AG04449 (cell line): ENCODE measurements at regions of chrX and their contacts with region 1.

Region 1: GRCh38 chrX:108126661-108127060 is 35.1 kb downstream of the ATG4A start:
- DNase-seq: no peak
- H3K4me3 ChIP-seq: no peak overlapping the region
- CTCF ChIP-seq: no peak

Region 2: GRCh38 chrX:107207089-107207488 is 919.6 kb before region 1 on chrX:
- CTCF ChIA-PET with region 1: no interaction called
- POLR2A ChIA-PET with region 1: no interaction called
- DNase-seq: no peak
- H3K4me3 ChIP-seq: no peak overlapping the region
- CTCF ChIP-seq: no peak

Region 3: GRCh38 chrX:108138814-108139702 is 12.4 kb after region 1 on chrX:
- CTCF ChIA-PET with region 1: interaction called, 27 read pairs
- POLR2A ChIA-PET with region 1: no interaction called
- DNase-seq: no peak
- H3K4me3 ChIP-seq: no peak overlapping the region
- CTCF ChIP-seq: peak; percentile 11